ENCODE measurements at regions of chr1 and their contacts with region 1.

Region 1: GRCh38 chr1:27349784-27350662 is 8.2 kb downstream of the SYTL1 start:
- DNase-seq: peak in 1 of 2 experiments; percentile 83
- H3K4me3 ChIP-seq: peak overlapping the region; percentile 47 to 63 (median 51)
- H3K27ac ChIP-seq: no peak overlapping the region
- H3K4me1 ChIP-seq: peaks cover 0 to 20% (median 8%) of the 10 kb centered on the region in 4 experiments; a peak in 6 of 7 replicates
- H3K27me3 ChIP-seq: peaks cover 0 to 8% (median 6%) of the 10 kb centered on the region in 4 experiments; a peak in 5 of 7 replicates
- CTCF ChIP-seq: no peak
- EP300 ChIP-seq: no peak; a peak in 1 of 3 replicates
- POLR2A ChIP-seq: 0 out of 3 replicates have a peak, but pooled peaks of 1 of the 2 experiments have one; percentile 24
- RAD21 ChIP-seq: no peak

Region 2: DNA sequence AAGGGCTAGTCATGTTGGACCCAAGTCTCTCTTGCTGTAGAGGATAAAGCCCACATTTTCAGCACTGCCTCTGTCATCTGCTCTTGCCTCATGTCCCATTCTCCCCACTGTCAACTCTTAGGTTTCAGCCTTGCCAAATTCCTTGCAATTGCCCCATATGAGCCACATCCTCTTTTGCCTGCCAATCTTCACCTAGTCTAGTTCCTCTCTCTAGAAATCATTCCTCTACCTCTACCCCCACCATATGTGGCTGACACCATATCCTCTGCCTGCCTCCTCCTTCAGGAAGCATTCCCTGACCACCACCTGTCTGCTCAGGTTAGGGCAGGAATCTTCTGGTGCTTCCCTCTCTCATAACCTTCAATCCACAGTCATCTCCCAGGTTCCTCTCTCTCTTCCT is 233.3 kb before region 1 on chr1:
- CTCF ChIA-PET with region 1: no interaction called
- POLR2A ChIA-PET with region 1: no interaction called
- DNase-seq: no peak
- H3K4me3 ChIP-seq: no peak overlapping the region
- H3K27ac ChIP-seq: no peak overlapping the region
- H3K4me1 ChIP-seq: peaks cover 0 to 4% (median 1%) of the 10 kb centered on the region in 4 experiments; a peak in 1 of 7 replicates
- H3K27me3 ChIP-seq: no peaks in the 10 kb centered on the region
- CTCF ChIP-seq: no peak
- EP300 ChIP-seq: no peak
- POLR2A ChIP-seq: no peak
- RAD21 ChIP-seq: no peak

Region 3: GRCh38 chr1:27225621-27226020 is 124.4 kb before region 1 on chr1:
- CTCF ChIA-PET with region 1: no interaction called
- POLR2A ChIA-PET with region 1: no interaction called
- DNase-seq: no peak
- H3K4me3 ChIP-seq: no peak overlapping the region
- H3K27ac ChIP-seq: no peak overlapping the region
- H3K4me1 ChIP-seq: no peaks in the 10 kb centered on the region
- H3K27me3 ChIP-seq: no peaks in the 10 kb centered on the region
- CTCF ChIP-seq: no peak
- EP300 ChIP-seq: no peak
- POLR2A ChIP-seq: no peak
- RAD21 ChIP-seq: no peak

Region 4: GRCh38 chr1:27287791-27288190 is 62.2 kb before region 1 on chr1:
- CTCF ChIA-PET with region 1: no interaction called
- POLR2A ChIA-PET with region 1: no interaction called
- DNase-seq: no peak
- H3K4me3 ChIP-seq: no peak overlapping the region
- H3K27ac ChIP-seq: no peak overlapping the region
- H3K4me1 ChIP-seq: no peaks in the 10 kb centered on the region
- H3K27me3 ChIP-seq: no peaks in the 10 kb centered on the region
- CTCF ChIP-seq: no peak
- EP300 ChIP-seq: no peak
- POLR2A ChIP-seq: no peak
- RAD21 ChIP-seq: no peak

Region 5: GRCh38 chr1:27306892-27307761 is 42.9 kb before region 1 on chr1:
- CTCF ChIA-PET with region 1: interaction called, 321 read pairs
- POLR2A ChIA-PET with region 1: interaction called, 17 read pairs
- DNase-seq: peak in 1 of 2 experiments; percentile 76
- H3K4me3 ChIP-seq: peak overlapping the region in 2 of 4 experiments; percentile 23 to 39; a peak in 4 of 8 replicates
- H3K27ac ChIP-seq: peak overlapping the region; percentile 57; the same call in 1 of the 2 replicates
- H3K4me1 ChIP-seq: peaks cover 11 to 15% (median 13%) of the 10 kb centered on the region in 4 experiments
- H3K27me3 ChIP-seq: no peaks in the 10 kb centered on the region
- CTCF ChIP-seq: peak; percentile 33 to 57 (median 41)
- EP300 ChIP-seq: no peak
- POLR2A ChIP-seq: 0 out of 3 replicates have a peak, but pooled peaks of 1 of the 2 experiments have one; percentile 28
- RAD21 ChIP-seq: 0 out of 4 replicates have a peak, but pooled peaks of 1 of the 2 experiments have one; percentile 12

Region 6: GRCh38 chr1:27321813-27322577 is 28.0 kb before region 1 on chr1 and contains the start of gene TMEM222:
- CTCF ChIA-PET with region 1: interaction called, 14 read pairs
- POLR2A ChIA-PET with region 1: interaction called, 13 read pairs
- DNase-seq: peak; percentile 88 to 99
- H3K4me3 ChIP-seq: peak within 1 kb of the TSS; percentile 78 to 100 (median 98)
- H3K27ac ChIP-seq: peak within 1 kb of the TSS; percentile 86
- H3K4me1 ChIP-seq: 0 out of 7 replicates have a peak, but pooled peaks cover 0 to 8% (median 0%) of the 10 kb centered on the region in 4 experiments
- H3K27me3 ChIP-seq: no peaks in the 10 kb centered on the region; a peak in 2 of 7 replicates
- CTCF ChIP-seq: peak in 2 of 3 experiments; percentile 1 to 14; a peak in 2 of 4 replicates
- EP300 ChIP-seq: peak; percentile 16 to 83; a peak in 2 of 3 replicates
- POLR2A ChIP-seq: peak; percentile 69 to 87
- RAD21 ChIP-seq: peak; percentile 7 to 30; a peak in 3 of 4 replicates
- total RNA-seq, gene TMEM222: 25.1 and 27.0 TPM in 2 replicates